WTC11 (cell line): ENCODE measurements at regions of chr2 and their contacts with region 1.

Region 1: DNA sequence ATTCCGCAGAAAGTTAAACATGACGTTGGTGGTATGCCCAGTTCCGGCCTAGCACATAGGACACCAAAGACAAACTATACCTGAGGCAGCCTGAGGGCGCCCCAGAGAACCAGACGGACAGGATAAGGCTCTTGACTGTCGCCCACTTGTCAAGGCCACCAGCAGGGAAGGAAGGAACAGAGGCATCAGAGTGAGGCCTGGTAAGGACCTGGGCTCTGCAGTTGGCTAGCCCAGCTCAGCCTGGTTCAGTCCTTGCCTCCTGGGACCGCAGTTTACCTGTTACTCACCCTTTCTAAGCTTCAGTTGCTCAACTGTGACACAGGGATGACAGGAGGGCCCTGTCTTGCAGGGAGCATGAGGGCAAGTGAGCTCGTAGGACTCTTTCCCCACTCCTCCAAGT is 82.1 kb downstream of the ACTR2 start:
- DNase-seq: no peak
- ATAC-seq: 0 out of 2 replicates have a peak, but pooled peaks have one; percentile 16
- H3K4me3 Mint-ChIP-seq: no peak overlapping the region
- H3K27ac Mint-ChIP-seq: no peak overlapping the region
- H3K4me1 Mint-ChIP-seq: no peaks in the 10 kb centered on the region
- H3K27me3 Mint-ChIP-seq: no peaks in the 10 kb centered on the region
- CTCF ChIP-seq: no peak

Region 2: DNA sequence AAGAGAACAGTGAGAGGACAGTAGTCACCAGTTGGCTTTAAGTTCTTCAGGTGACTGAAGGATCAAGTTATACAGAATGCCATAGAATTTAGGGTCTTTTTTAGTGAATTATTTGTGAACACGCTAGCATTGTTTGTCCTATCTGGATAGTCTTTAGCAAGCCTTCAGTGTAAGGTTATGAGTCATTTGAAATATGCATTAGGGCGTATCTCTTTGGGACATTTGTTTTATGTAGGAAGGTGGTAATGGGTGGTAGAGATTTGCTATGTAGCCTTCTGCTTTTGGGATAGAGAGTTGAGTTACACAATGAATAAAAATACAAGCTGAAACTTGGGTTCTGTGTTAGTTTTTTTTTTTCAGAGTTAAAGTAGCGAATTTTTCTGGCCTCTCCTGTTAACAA is 69.1 kb before region 1 on chr2:
- CTCF ChIA-PET with region 1: no interaction called
- POLR2A ChIA-PET with region 1: no interaction called
- DNase-seq: no peak
- ATAC-seq: no peak
- H3K4me3 Mint-ChIP-seq: no peak overlapping the region
- H3K27ac Mint-ChIP-seq: no peak overlapping the region
- H3K4me1 Mint-ChIP-seq: no peaks in the 10 kb centered on the region
- H3K27me3 Mint-ChIP-seq: no peaks in the 10 kb centered on the region
- CTCF ChIP-seq: no peak

Region 3: GRCh38 chr2:65331336-65332025 is 21.8 kb after region 1 on chr2:
- CTCF ChIA-PET with region 1: no interaction called
- POLR2A ChIA-PET with region 1: interaction called, 12 read pairs
- DNase-seq: no peak
- ATAC-seq: no peak
- H3K4me3 Mint-ChIP-seq: no peak overlapping the region
- H3K27ac Mint-ChIP-seq: no peak overlapping the region
- H3K4me1 Mint-ChIP-seq: no peaks in the 10 kb centered on the region
- H3K27me3 Mint-ChIP-seq: no peaks in the 10 kb centered on the region
- CTCF ChIP-seq: no peak

Region 4: GRCh38 chr2:65566620-65567019 is 256.9 kb after region 1 on chr2:
- CTCF ChIA-PET with region 1: no interaction called
- POLR2A ChIA-PET with region 1: no interaction called
- DNase-seq: no peak
- ATAC-seq: peak; percentile 85
- H3K4me3 Mint-ChIP-seq: no peak overlapping the region
- H3K27ac Mint-ChIP-seq: no peak overlapping the region
- H3K4me1 Mint-ChIP-seq: peaks cover 13% of the 10 kb centered on the region
- H3K27me3 Mint-ChIP-seq: peaks cover 53% of the 10 kb centered on the region
- CTCF ChIP-seq: no peak